Activated T-helper 1 cell treated with anti-CD3 and anti-CD28 coated beads, Interleukin-12 subunit alpha, Interleukin-12 subunit beta, Interleukin-2, Interleukin-4 antibody, amounts not matched to agents 30 ng/mL and 10 ng/mL and 1 ng/mL, durations not matched to agents 14 hours and 24 hours and 36 hours (primary cell): ENCODE measurements at regions of chr20 and their contacts with region 1.

Region 1: GRCh38 chr20:22575087-22575721 is 9.2 kb downstream of the FOXA2 start:
- DNase-seq: no peak
- H3K4me3 Mint-ChIP-seq: no peak overlapping the region
- H3K27ac Mint-ChIP-seq: no peak overlapping the region
- H3K4me1 Mint-ChIP-seq: no peaks in the 10 kb centered on the region
- H3K27me3 Mint-ChIP-seq: peaks cover 66% of the 10 kb centered on the region

Region 2: DNA sequence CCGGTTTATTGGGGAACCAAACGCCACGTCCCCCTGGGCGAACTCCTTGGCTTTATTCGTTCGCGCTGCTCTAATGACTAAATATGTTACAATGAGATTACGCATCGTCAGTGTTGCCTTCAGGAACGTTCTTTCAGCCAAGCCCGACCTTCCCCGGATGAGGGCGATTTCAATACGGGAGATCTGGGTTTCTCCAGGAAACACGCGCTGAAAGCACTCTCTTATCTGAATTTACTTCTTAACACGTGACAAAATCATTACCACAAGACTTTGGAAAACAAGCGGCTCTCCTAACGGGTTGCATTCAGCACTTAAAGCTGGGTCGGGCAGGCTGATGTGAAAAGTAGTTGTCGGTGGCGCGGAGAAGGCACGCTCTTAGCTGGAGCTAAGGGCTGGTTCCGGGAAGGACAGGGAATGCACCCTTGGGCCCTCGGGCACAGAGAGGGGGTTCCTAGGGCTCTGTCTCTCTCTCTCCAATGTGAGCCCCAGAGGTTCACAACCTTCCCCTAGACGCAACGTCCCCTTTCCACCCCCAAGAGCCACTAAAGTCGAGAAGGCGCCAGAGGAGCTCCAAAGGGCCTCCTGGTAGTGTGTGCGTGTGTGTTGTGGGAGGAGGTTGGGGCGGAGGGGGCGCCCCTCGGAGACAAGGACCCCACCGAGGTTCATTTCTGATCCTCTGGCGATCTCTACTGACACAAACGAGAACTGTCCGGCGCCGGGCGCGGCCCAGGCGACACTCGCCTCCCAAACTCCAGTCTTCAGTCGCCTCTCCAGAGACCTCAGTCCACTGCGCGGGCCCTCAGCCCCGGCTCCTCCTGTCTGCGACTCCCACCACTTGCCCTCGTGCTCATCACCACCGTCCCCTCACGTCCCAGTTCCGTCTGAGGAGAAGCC is 1054.3 kb before region 1 on chr20:
- intact Hi-C with region 1: loop called (anchors 2 kb)
- DNase-seq: no peak
- H3K4me3 Mint-ChIP-seq: no peak overlapping the region
- H3K27ac Mint-ChIP-seq: peak overlapping the region; percentile 76
- H3K4me1 Mint-ChIP-seq: peaks cover 5% of the 10 kb centered on the region
- H3K27me3 Mint-ChIP-seq: peaks cover 83% of the 10 kb centered on the region